ENCODE measurements at regions of chr2 and their contacts with region 1.

Region 1: DNA sequence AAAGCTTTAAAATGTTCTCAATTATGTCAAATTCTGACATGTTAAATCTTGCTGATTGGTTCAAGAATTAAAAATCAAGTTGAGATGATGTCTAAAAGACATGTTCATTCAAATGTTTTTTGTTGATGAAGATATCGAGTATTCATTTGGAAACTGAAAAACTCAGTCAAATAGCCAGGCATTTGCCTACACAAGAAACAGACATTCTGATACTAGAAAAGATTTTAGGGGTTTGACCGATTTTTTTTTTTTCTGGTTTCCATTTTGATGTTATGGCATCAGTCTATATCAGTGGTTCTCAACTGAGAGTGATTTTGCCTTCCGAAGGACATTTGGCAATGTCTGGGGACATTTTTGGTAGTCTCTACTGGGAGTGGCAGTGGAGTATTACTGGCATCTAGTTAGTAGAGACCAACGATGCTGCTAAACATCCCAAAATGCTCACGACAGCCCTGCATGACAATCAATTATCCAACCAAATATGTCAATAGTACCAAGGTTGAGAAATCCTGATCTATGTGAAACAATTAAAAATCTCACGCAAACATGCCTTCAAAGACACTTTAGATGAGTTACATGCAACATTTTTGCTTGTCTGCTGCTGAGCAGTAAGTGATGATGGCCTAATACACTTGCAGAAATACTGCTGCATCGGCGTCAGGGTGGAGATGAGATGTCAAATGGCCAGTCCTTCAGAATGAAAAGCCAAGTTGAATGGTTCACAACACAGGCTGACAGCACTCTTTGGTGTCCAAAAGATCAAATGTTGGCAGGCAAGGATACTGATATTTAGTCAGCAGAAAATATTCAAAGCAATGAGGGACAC is 12.5 kb downstream of the RASGRP3 start:
- DNase-seq: no peak
- ATAC-seq: no peak
- H3K4me3 ChIP-seq: no peak overlapping the region
- H3K27ac ChIP-seq: peak overlapping the region; percentile 59
- H3K4me1 ChIP-seq: peaks cover 54% of the 10 kb centered on the region
- H3K27me3 ChIP-seq: no peaks in the 10 kb centered on the region
- CTCF ChIP-seq: no peak

Region 2: GRCh38 chr2:33529771-33530351 is 40.9 kb after region 1 on chr2:
- intact Hi-C with region 1: loop called (anchors 5 kb)
- DNase-seq: no peak
- ATAC-seq: peak in 2 of 4 donors; percentile 37 to 43
- H3K4me3 ChIP-seq: no peak overlapping the region
- H3K27ac ChIP-seq: peak overlapping the region; percentile 79
- H3K4me1 ChIP-seq: peaks cover 29% of the 10 kb centered on the region
- H3K27me3 ChIP-seq: no peaks in the 10 kb centered on the region
- CTCF ChIP-seq: no peak